Mammary epithelial cell (primary cell): ENCODE measurements at regions of chr22 and their contacts with region 1.

Region 1: GRCh38 chr22:22463855-22464540 is 44.5 kb downstream of the ZNF280B start:
- DNase-seq: peak; percentile 25
- H3K4me3 ChIP-seq: no peak overlapping the region
- H3K27ac ChIP-seq: no peak overlapping the region
- H3K4me1 ChIP-seq: no peaks in the 10 kb centered on the region
- H3K27me3 ChIP-seq: no peaks in the 10 kb centered on the region
- CTCF ChIP-seq: peak; percentile 45 to 62

Region 2: DNA sequence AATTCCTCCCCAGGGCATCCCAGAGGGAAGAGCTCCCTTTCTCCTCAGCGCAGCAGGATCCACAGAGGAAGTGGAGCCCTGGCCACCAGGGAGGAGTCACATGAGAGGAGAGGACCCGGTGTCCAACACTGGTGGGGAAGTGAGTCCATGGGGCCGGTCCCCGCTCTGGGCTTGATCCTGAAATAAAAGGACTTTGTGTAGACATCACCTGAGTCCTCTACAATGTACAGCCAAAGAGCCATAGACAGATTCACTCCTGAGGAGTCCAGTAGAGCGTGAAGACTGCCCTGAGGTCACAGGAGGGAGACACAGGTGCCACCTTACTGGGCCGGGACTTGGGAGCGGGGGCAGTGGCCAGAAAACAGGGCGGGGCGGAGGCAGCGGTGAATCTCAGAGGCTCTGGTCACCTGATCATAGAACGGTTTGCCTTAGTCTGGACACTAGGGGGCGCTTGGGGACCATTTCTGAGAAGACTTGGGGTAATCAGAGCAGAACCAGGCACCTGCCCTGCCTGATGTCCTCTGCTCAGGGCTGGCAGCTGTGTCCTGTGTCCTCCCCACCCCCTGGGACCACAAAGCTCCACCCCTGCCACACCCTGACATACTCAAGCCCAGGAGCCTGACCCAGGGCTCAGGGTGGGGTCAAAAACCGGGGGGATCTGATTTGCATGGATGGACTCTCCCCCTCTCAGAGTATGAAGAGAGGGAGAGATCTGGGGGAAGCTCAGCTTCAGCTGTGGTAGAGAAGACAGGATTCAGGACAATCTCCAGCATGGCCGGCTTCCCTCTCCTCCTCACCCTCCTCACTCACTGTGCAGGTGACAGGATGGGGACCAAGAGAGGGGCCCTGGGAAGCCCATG is 106.7 kb before region 1 on chr22:
- CTCF ChIA-PET with region 1: no interaction called
- dilution Hi-C with region 1: no loop called
- in situ Hi-C with region 1: no loop called
- intact Hi-C with region 1: loop called (anchors 5 kb)
- DNase-seq: peak; percentile 55
- H3K4me3 ChIP-seq: no peak overlapping the region
- H3K27ac ChIP-seq: no peak overlapping the region
- H3K4me1 ChIP-seq: no peaks in the 10 kb centered on the region
- H3K27me3 ChIP-seq: no peaks in the 10 kb centered on the region
- CTCF ChIP-seq: peak; percentile 66 to 84

Region 3: GRCh38 chr22:22687638-22688500 is 223.9 kb after region 1 on chr22:
- CTCF ChIA-PET with region 1: no interaction called
- dilution Hi-C with region 1: no loop called
- in situ Hi-C with region 1: no loop called
- intact Hi-C with region 1: loop called (anchors 5 kb)
- DNase-seq: peak; percentile 9
- H3K4me3 ChIP-seq: no peak overlapping the region
- H3K27ac ChIP-seq: no peak overlapping the region
- H3K4me1 ChIP-seq: no peaks in the 10 kb centered on the region
- H3K27me3 ChIP-seq: no peaks in the 10 kb centered on the region
- CTCF ChIP-seq: peak; percentile 71 to 75

Region 4: GRCh38 chr22:22748297-22748743 is 284.3 kb after region 1 on chr22:
- CTCF ChIA-PET with region 1: no interaction called
- dilution Hi-C with region 1: no loop called
- in situ Hi-C with region 1: no loop called
- intact Hi-C with region 1: loop called (anchors 5 kb)
- DNase-seq: peak; percentile 31
- H3K4me3 ChIP-seq: no peak overlapping the region
- H3K27ac ChIP-seq: no peak overlapping the region
- H3K4me1 ChIP-seq: no peaks in the 10 kb centered on the region
- H3K27me3 ChIP-seq: no peaks in the 10 kb centered on the region
- CTCF ChIP-seq: peak; percentile 72 to 81

Region 5: GRCh38 chr22:22848364-22848866 is 384.4 kb after region 1 on chr22:
- CTCF ChIA-PET with region 1: no interaction called
- dilution Hi-C with region 1: no loop called
- in situ Hi-C with region 1: no loop called
- intact Hi-C with region 1: loop called (anchors 2 kb)
- DNase-seq: peak; percentile 28
- H3K4me3 ChIP-seq: no peak overlapping the region
- H3K27ac ChIP-seq: no peak overlapping the region
- H3K4me1 ChIP-seq: no peaks in the 10 kb centered on the region
- H3K27me3 ChIP-seq: no peaks in the 10 kb centered on the region
- CTCF ChIP-seq: peak; percentile 97 to 98

Region 6: GRCh38 chr22:23128269-23129108 is 664.5 kb after region 1 on chr22:
- CTCF ChIA-PET with region 1: no interaction called
- dilution Hi-C with region 1: no loop called
- in situ Hi-C with region 1: loop called in 1 of 2 experiments (anchors 25 kb)
- intact Hi-C with region 1: loop called (anchors 10 kb)
- DNase-seq: peak; percentile 47
- H3K4me3 ChIP-seq: no peak overlapping the region
- H3K27ac ChIP-seq: no peak overlapping the region
- H3K4me1 ChIP-seq: no peaks in the 10 kb centered on the region
- H3K27me3 ChIP-seq: no peaks in the 10 kb centered on the region
- CTCF ChIP-seq: peak; percentile 50 to 79

Region 7: DNA sequence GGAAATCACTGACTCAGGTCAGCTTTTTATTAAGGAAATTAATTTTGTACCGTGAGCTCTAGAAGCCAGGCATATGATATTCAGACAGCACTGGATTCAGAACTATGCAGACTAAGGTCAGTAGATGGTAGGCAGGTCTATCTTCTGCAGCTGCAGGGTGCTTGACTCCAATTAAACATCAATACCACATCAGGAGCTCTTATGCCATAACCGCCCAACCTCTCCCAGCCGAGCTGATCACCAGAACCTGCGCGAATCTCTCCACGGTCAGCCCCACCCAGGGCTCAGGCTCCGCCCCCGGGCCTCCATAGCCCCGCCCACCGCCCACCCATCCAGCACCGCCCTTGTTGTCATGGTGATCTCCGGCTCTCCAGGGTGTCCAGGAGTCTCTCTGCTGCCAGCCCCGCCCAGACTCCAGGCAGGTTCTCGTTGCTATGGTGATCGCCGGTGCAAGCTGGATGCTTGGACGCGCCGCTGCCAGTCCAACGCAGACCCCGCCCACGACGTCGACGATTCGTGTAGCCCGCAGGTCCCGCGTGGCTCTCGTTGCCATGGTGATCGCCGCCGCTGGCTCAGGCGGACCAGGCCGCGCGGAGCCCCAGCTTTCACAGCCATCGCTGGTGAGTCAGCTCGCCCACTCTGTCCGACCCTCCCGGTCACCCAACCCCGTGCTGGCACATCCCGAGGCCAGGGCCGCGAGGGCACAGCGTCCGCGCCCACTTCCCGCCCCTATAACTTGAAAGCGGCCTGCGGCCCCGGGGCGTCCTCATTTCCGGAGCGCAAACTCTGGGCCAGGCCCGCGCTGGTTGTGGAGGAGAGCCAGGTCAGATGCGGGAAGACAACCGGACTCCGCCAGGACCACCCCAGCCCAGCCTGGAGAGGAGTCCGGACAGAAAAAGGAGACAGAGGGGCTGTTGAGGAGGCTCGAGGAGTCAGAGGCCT is 681.2 kb after region 1 on chr22 and contains the start of gene RAB36:
- CTCF ChIA-PET with region 1: no interaction called
- dilution Hi-C with region 1: no loop called
- in situ Hi-C with region 1: loop called in 1 of 2 experiments (anchors 25 kb)
- intact Hi-C with region 1: no loop called
- DNase-seq: peak; percentile 99
- H3K4me3 ChIP-seq: peak within 1 kb of the TSS; percentile 54 to 64 (median 60)
- H3K27ac ChIP-seq: peak within 1 kb of the TSS; percentile 89
- H3K4me1 ChIP-seq: peaks cover 18% of the 10 kb centered on the region
- H3K27me3 ChIP-seq: no peaks in the 10 kb centered on the region
- CTCF ChIP-seq: no peak
- total RNA-seq, gene RAB36: 8.6 to 8.7 TPM